Naive thymus-derived CD4-positive, alpha-beta T cell (primary cell): ENCODE measurements at regions of chr14 and their contacts with region 1.

Region 1: GRCh38 chr14:23015618-23016017 is 5.7 kb upstream of the C14orf93 start:
- DNase-seq: peak in 1 of 9 donors; percentile 20
- ATAC-seq: no peak
- H3K4me3 ChIP-seq: no peak overlapping the region
- H3K4me3 Mint-ChIP-seq: peak overlapping the region; percentile 25 to 78 (median 72)
- H3K27ac ChIP-seq: peak overlapping the region; percentile 49
- H3K27ac Mint-ChIP-seq: peak overlapping the region in 8 of 9 donors; percentile 81 to 93 (median 89)
- H3K4me1 ChIP-seq: peaks cover 0 to 15% of the 10 kb centered on the region in 2 donors
- H3K4me1 Mint-ChIP-seq: peaks cover 4 to 30% (median 22%) of the 10 kb centered on the region in 7 donors
- H3K27me3 ChIP-seq: no peaks in the 10 kb centered on the region
- H3K27me3 Mint-ChIP-seq: no peaks in the 10 kb centered on the region

Region 2: GRCh38 chr14:23034483-23035302 is 19.1 kb after region 1 on chr14 and contains the start of gene PSMB5:
- CTCF ChIA-PET with region 1: interaction called, 7 read pairs
- POLR2A ChIA-PET with region 1: interaction called, 46 read pairs
- intact Hi-C with region 1: no loop called
- DNase-seq: peak; percentile 63 to 94 (median 91)
- ATAC-seq: peak; percentile 95
- H3K4me3 ChIP-seq: peak within 1 kb of the TSS; percentile 79
- H3K4me3 Mint-ChIP-seq: peak within 1 kb of the TSS; percentile 87 to 96 (median 92)
- H3K27ac ChIP-seq: peak within 1 kb of the TSS; percentile 83
- H3K27ac Mint-ChIP-seq: peak within 1 kb of the TSS; percentile 93 to 99 (median 96)
- H3K4me1 ChIP-seq: peaks cover 9 to 17% of the 10 kb centered on the region in 2 donors
- H3K4me1 Mint-ChIP-seq: peaks cover 22 to 43% (median 29%) of the 10 kb centered on the region in 7 donors
- H3K27me3 ChIP-seq: no peaks in the 10 kb centered on the region
- H3K27me3 Mint-ChIP-seq: no peaks in the 10 kb centered on the region
- total RNA-seq, gene PSMB5: 19.2 to 69.1 (median 32.8) TPM